ENCODE measurements at regions of chr17 and their contacts with region 1.

Region 1: DNA sequence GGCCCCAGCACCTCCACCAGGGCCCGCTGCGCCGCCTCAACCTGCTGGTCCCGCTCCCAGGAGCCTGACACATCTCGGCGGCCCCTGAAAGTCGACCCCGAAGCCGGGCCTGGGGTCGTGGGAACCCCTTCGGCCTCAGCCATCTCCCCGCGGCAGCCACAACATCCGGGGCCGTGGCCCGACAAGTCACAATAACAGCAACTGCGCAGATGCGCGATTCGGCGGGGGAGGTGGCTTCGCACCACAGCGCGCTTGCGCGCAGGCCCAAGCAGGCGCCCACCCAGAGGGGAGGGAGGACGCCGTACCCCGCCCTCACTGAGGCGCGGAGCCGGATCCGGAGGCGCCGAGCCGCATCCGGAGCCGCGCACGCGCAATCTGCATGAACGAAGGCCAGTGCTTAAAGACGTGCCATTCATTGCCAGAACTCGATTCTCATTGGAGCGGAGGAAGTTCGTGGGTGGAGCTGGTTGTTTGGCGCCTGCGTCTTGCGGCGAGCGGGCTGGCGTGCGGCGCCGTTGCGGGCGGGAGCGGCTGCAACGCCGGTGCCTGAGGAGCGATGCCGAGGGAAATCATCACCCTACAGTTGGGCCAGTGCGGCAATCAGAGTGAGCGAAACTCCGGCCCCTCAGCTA is at the starts of genes RETREG3 and TUBG1:
- DNase-seq: peak; percentile 97 to 100 (median 100)
- ATAC-seq: peak; percentile 95
- H3K4me3 ChIP-seq: peak within 1 kb of the TSS; percentile 85
- H3K4me3 Mint-ChIP-seq: peak within 1 kb of the TSS; percentile 95 to 100 (median 100)
- H3K27ac ChIP-seq: peak within 1 kb of the TSS; percentile 89
- H3K27ac Mint-ChIP-seq: peak within 1 kb of the TSS; percentile 94 to 100 (median 97)
- H3K4me1 ChIP-seq: peaks cover 30 to 37% of the 10 kb centered on the region in 2 donors
- H3K4me1 Mint-ChIP-seq: peaks cover 38 to 55% (median 41%) of the 10 kb centered on the region in 7 donors
- H3K27me3 ChIP-seq: no peaks in the 10 kb centered on the region
- H3K27me3 Mint-ChIP-seq: peaks cover 0 to 2% (median 0%) of the 10 kb centered on the region in 5 donors
- total RNA-seq, gene RETREG3: 53.3 to 132 (median 75.7) TPM
- total RNA-seq, gene TUBG1: 7.8 to 54.4 (median 12.5) TPM

Region 2: DNA sequence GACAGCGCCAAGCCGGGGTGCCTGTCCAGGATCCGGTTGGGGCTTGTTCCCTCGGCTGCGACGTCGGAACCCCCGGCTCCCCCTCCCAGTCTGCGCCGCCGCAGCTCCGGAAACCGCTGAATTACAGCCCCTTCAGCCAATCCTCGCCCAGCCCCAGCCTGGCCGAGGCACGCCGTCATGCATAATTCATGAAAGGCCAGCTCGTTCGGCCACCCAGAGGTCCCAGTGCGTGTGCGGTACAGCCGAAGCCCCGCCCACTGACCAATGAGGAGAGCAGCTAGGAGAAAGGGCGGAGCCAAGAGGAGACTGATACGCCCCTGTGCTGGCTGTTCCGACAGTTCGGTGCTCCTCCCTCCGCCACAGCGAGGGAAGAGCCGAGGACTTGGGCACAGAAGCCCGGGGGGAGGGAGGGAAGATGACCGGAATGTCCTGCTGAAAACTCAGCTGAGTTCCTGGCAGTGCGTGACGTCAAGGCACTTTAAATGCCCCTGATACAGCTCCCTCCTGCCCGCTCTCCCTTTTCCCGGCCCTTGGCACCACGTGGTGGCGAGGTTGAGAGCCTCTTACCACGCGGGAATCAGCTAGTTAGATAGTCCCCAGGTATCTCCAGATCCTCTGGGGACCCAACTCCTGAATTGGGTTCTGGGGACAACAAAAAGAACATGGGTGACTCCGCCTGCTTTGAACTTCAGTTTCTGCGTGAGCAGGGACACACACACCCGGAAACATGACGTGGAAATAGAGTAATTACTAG is 220.7 kb before region 1 on chr17 and contains the start of gene STAT3:
- CTCF ChIA-PET with region 1: no interaction called
- POLR2A ChIA-PET with region 1: no interaction called
- intact Hi-C with region 1: loop called (anchors 1 kb)
- DNase-seq: peak; percentile 100
- ATAC-seq: peak; percentile 93
- H3K4me3 ChIP-seq: peak within 1 kb of the TSS; percentile 65
- H3K4me3 Mint-ChIP-seq: peak within 1 kb of the TSS; percentile 87 to 99 (median 96)
- H3K27ac ChIP-seq: peak within 1 kb of the TSS; percentile 94
- H3K27ac Mint-ChIP-seq: peak within 1 kb of the TSS; percentile 99 to 100 (median 100)
- H3K4me1 ChIP-seq: peaks cover 13 to 20% of the 10 kb centered on the region in 2 donors
- H3K4me1 Mint-ChIP-seq: peaks cover 35 to 59% (median 48%) of the 10 kb centered on the region in 7 donors
- H3K27me3 ChIP-seq: no peaks in the 10 kb centered on the region
- H3K27me3 Mint-ChIP-seq: peaks cover 0 to 3% (median 0%) of the 10 kb centered on the region in 5 donors
- total RNA-seq, gene STAT3: 133 to 275 (median 231) TPM

Region 3: GRCh38 chr17:42577532-42578281 is 31.6 kb before region 1 on chr17 and contains the start of gene PSMC3IP:
- CTCF ChIA-PET with region 1: interaction called, 17 read pairs
- POLR2A ChIA-PET with region 1: interaction called, 28 read pairs
- intact Hi-C with region 1: loop called (anchors 1 kb)
- DNase-seq: peak; percentile 74 to 95 (median 85)
- ATAC-seq: peak; percentile 98
- H3K4me3 ChIP-seq: peak within 1 kb of the TSS; percentile 96
- H3K4me3 Mint-ChIP-seq: peak within 1 kb of the TSS; percentile 86 to 100 (median 96)
- H3K27ac ChIP-seq: peak within 1 kb of the TSS; percentile 87
- H3K27ac Mint-ChIP-seq: peak within 1 kb of the TSS; percentile 86 to 99 (median 96)
- H3K4me1 ChIP-seq: peaks cover 9 to 12% of the 10 kb centered on the region in 2 donors
- H3K4me1 Mint-ChIP-seq: peaks cover 17 to 53% (median 40%) of the 10 kb centered on the region in 7 donors
- H3K27me3 ChIP-seq: no peaks in the 10 kb centered on the region
- H3K27me3 Mint-ChIP-seq: no peaks in the 10 kb centered on the region
- total RNA-seq, gene PSMC3IP: 2.7 to 14.0 (median 5.2) TPM

Region 4: GRCh38 chr17:42744806-42745617 is 135.7 kb after region 1 on chr17 and contains the start of gene EZH1:
- CTCF ChIA-PET with region 1: no interaction called
- POLR2A ChIA-PET with region 1: no interaction called
- intact Hi-C with region 1: loop called in 1 of 2 experiments (anchors 1 kb)
- DNase-seq: peak; percentile 88 to 96 (median 94)
- ATAC-seq: peak; percentile 97
- H3K4me3 ChIP-seq: peak within 1 kb of the TSS; percentile 78
- H3K4me3 Mint-ChIP-seq: peak within 1 kb of the TSS; percentile 83 to 99 (median 94)
- H3K27ac ChIP-seq: peak within 1 kb of the TSS; percentile 90
- H3K27ac Mint-ChIP-seq: peak within 1 kb of the TSS; percentile 86 to 97 (median 94)
- H3K4me1 ChIP-seq: peaks cover 12 to 16% of the 10 kb centered on the region in 2 donors
- H3K4me1 Mint-ChIP-seq: peaks cover 15 to 34% (median 22%) of the 10 kb centered on the region in 7 donors
- H3K27me3 ChIP-seq: no peaks in the 10 kb centered on the region
- H3K27me3 Mint-ChIP-seq: peaks cover 0 to 41% (median 11%) of the 10 kb centered on the region in 5 donors
- total RNA-seq, gene EZH1: 50.9 to 212 (median 95.4) TPM

Region 5: DNA sequence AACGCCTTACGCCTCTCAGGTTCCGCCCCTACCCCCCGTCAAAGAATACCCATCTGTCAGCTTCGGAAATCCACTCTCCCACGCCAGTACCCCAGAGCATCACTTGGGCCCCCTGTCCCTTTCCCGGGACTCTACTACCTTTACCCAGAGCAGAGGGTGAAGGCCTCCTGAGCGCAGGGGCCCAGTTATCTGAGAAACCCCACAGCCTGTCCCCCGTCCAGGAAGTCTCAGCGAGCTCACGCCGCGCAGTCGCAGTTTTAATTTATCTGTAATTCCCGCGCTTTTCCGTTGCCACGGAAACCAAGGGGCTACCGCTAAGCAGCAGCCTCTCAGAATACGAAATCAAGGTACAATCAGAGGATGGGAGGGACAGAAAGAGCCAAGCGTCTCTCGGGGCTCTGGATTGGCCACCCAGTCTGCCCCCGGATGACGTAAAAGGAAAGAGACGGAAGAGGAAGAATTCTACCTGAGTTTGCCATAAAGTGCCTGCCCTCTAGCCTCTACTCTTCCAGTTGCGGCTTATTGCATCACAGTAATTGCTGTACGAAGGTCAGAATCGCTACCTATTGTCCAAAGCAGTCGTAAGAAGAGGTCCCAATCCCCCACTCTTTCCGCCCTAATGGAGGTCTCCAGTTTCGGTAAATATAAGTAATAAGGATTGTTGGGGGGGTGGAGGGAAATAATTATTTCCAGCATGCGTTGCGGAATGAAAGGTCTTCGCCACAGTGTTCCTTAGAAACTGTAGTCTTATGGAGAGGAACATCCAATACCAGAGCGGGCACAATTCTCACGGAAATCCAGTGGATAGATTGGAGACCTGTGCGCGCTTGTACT is 516.1 kb after region 1 on chr17 and contains the start of gene BRCA1:
- CTCF ChIA-PET with region 1: no interaction called
- POLR2A ChIA-PET with region 1: no interaction called
- intact Hi-C with region 1: loop called in 1 of 2 experiments (anchors 1 kb)
- DNase-seq: peak; percentile 78 to 98 (median 96)
- ATAC-seq: peak; percentile 100
- H3K4me3 ChIP-seq: peak within 1 kb of the TSS; percentile 83
- H3K4me3 Mint-ChIP-seq: peak within 1 kb of the TSS; percentile 88 to 97 (median 94)
- H3K27ac ChIP-seq: peak within 1 kb of the TSS; percentile 83
- H3K27ac Mint-ChIP-seq: peak within 1 kb of the TSS; percentile 88 to 98 (median 93)
- H3K4me1 ChIP-seq: peaks cover 6 to 8% of the 10 kb centered on the region in 2 donors
- H3K4me1 Mint-ChIP-seq: peaks cover 14 to 39% (median 30%) of the 10 kb centered on the region in 7 donors
- H3K27me3 ChIP-seq: no peaks in the 10 kb centered on the region
- H3K27me3 Mint-ChIP-seq: no peaks in the 10 kb centered on the region
- total RNA-seq, gene BRCA1: 2.6 to 54.1 (median 5.4) TPM

Measured in naive thymus-derived CD4-positive, alpha-beta T cell (primary cell).